Activated naive CD8-positive, alpha-beta T cell treated with anti-CD3 and anti-CD28 coated beads, Interleukin-2, amount 10 ng/mL, durations not matched to agents 7 days and 5 days (primary cell): ENCODE measurements at regions of chr12 and their contacts with region 1.

Region 1: DNA sequence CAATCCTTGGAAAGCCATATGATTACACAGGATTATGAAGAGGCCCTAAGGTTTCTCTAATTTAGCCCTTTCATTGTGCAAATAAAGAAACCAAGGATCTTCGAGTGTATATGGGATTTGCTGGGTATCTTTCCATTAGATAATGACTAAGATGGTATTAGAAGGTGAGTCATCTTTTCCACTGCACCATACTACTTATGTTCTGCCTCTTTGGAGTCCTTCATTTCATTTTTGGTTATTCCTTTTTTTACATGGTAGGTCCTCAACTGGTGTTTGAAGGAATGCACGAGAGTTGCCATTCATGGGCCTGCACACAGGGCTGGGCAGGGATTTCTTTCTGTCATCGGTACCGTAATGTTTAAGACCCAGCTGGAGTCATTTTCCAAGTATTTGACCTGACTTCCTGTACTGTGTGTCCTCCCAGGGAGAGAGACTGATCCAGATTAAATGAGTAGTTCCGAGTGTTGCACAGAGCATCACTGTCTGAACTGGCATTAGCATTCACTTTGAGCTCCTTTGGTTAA is 85.7 kb downstream of the BORCS5 start:
- DNase-seq: no peak
- ATAC-seq: no peak
- H3K4me3 Mint-ChIP-seq: no peak overlapping the region
- H3K27ac Mint-ChIP-seq: peak overlapping the region; percentile 96
- H3K4me1 Mint-ChIP-seq: peaks cover 51% of the 10 kb centered on the region
- H3K27me3 Mint-ChIP-seq: no peaks in the 10 kb centered on the region

Region 2: GRCh38 chr12:12467264-12467663 is 24.7 kb after region 1 on chr12:
- POLR2A ChIA-PET with region 1: interaction called, 11 read pairs
- DNase-seq: no peak
- ATAC-seq: no peak
- H3K4me3 Mint-ChIP-seq: peak overlapping the region; percentile 13
- H3K27ac Mint-ChIP-seq: peak overlapping the region; percentile 65
- H3K4me1 Mint-ChIP-seq: peaks cover 39% of the 10 kb centered on the region
- H3K27me3 Mint-ChIP-seq: no peaks in the 10 kb centered on the region

Region 3: GRCh38 chr12:12474931-12475795 is 32.6 kb after region 1 on chr12:
- POLR2A ChIA-PET with region 1: interaction called, 11 read pairs
- DNase-seq: no peak
- ATAC-seq: peak; percentile 92
- H3K4me3 Mint-ChIP-seq: peak overlapping the region; percentile 52
- H3K27ac Mint-ChIP-seq: peak overlapping the region; percentile 85
- H3K4me1 Mint-ChIP-seq: peaks cover 30% of the 10 kb centered on the region
- H3K27me3 Mint-ChIP-seq: no peaks in the 10 kb centered on the region

Region 4: GRCh38 chr12:12505544-12506495 is 63.2 kb after region 1 on chr12:
- POLR2A ChIA-PET with region 1: no interaction called
- DNase-seq: no peak
- ATAC-seq: peak; percentile 66
- H3K4me3 Mint-ChIP-seq: peak overlapping the region; percentile 10
- H3K27ac Mint-ChIP-seq: no peak overlapping the region
- H3K4me1 Mint-ChIP-seq: peaks cover 17% of the 10 kb centered on the region
- H3K27me3 Mint-ChIP-seq: no peaks in the 10 kb centered on the region